ENCODE measurements at regions of chr1 and their contacts with region 1.

Region 1: GRCh38 chr1:112803906-112804762 is 89.0 kb upstream of the PPM1J start:
- DNase-seq: peak in 1 of 2 experiments; percentile 80
- H3K4me3 ChIP-seq: no peak overlapping the region
- H3K27ac ChIP-seq: no peak overlapping the region
- H3K4me1 ChIP-seq: peaks cover 2 to 6% (median 4%) of the 10 kb centered on the region in 4 experiments; a peak in 5 of 7 replicates
- H3K27me3 ChIP-seq: no peaks in the 10 kb centered on the region
- CTCF ChIP-seq: peak; percentile 98 to 99 (median 98)
- EP300 ChIP-seq: no peak
- POLR2A ChIP-seq: no peak
- RAD21 ChIP-seq: peak; percentile 100

Region 2: GRCh38 chr1:112722601-112723510 is 81.3 kb before region 1 on chr1:
- CTCF ChIA-PET with region 1: interaction called, 547 read pairs
- POLR2A ChIA-PET with region 1: interaction called, 20 read pairs
- DNase-seq: peak in 1 of 2 experiments; percentile 68
- H3K4me3 ChIP-seq: peak overlapping the region in 2 of 4 experiments; percentile 18 to 52; a peak in 5 of 8 replicates
- H3K27ac ChIP-seq: no peak overlapping the region
- H3K4me1 ChIP-seq: peaks cover 8 to 21% (median 16%) of the 10 kb centered on the region in 4 experiments
- H3K27me3 ChIP-seq: peaks cover 0 to 26% (median 16%) of the 10 kb centered on the region in 4 experiments; a peak in 5 of 7 replicates
- CTCF ChIP-seq: no peak
- EP300 ChIP-seq: no peak
- POLR2A ChIP-seq: no peak
- RAD21 ChIP-seq: no peak

Region 3: GRCh38 chr1:112744009-112744578 is 60.0 kb before region 1 on chr1:
- CTCF ChIA-PET with region 1: interaction called, 39 read pairs
- POLR2A ChIA-PET with region 1: interaction called, 4 read pairs
- DNase-seq: peak in 1 of 2 experiments; percentile 86
- H3K4me3 ChIP-seq: peak overlapping the region; percentile 39 to 59 (median 50)
- H3K27ac ChIP-seq: no peak overlapping the region
- H3K4me1 ChIP-seq: peaks cover 0 to 7% (median 5%) of the 10 kb centered on the region in 4 experiments; a peak in 4 of 7 replicates
- H3K27me3 ChIP-seq: peaks cover 9 to 34% (median 27%) of the 10 kb centered on the region in 4 experiments
- CTCF ChIP-seq: peak; percentile 47 to 51 (median 51)
- EP300 ChIP-seq: no peak
- POLR2A ChIP-seq: no peak
- RAD21 ChIP-seq: peak; percentile 35 to 52; a peak in 2 of 4 replicates

Region 4: GRCh38 chr1:112855152-112855828 is 51.2 kb after region 1 on chr1:
- CTCF ChIA-PET with region 1: interaction called, 12 read pairs
- POLR2A ChIA-PET with region 1: interaction called, 5 read pairs
- DNase-seq: no peak
- H3K4me3 ChIP-seq: no peak overlapping the region
- H3K27ac ChIP-seq: no peak overlapping the region
- H3K4me1 ChIP-seq: peaks cover 0 to 6% (median 1%) of the 10 kb centered on the region in 4 experiments; a peak in 5 of 7 replicates
- H3K27me3 ChIP-seq: no peaks in the 10 kb centered on the region
- CTCF ChIP-seq: no peak
- EP300 ChIP-seq: no peak
- POLR2A ChIP-seq: no peak
- RAD21 ChIP-seq: no peak

Region 5: GRCh38 chr1:112955781-112956543 is 151.8 kb after region 1 on chr1 and contains the start of gene SLC16A1:
- CTCF ChIA-PET with region 1: interaction called, 13 read pairs
- POLR2A ChIA-PET with region 1: interaction called, 3 read pairs
- DNase-seq: peak; percentile 49 to 89
- H3K4me3 ChIP-seq: peak within 1 kb of the TSS; percentile 81 to 95 (median 90)
- H3K27ac ChIP-seq: peak within 1 kb of the TSS; percentile 79
- H3K4me1 ChIP-seq: peaks cover 4 to 8% (median 5%) of the 10 kb centered on the region in 4 experiments; a peak in 5 of 7 replicates
- H3K27me3 ChIP-seq: no peaks in the 10 kb centered on the region
- CTCF ChIP-seq: peak in 2 of 3 experiments; percentile 21 to 22; a peak in 2 of 4 replicates
- EP300 ChIP-seq: no peak
- POLR2A ChIP-seq: peak; percentile 47 to 67
- RAD21 ChIP-seq: no peak; a peak in 1 of 4 replicates
- total RNA-seq, gene SLC16A1: 435 and 442 TPM in 2 replicates

Region 6: DNA sequence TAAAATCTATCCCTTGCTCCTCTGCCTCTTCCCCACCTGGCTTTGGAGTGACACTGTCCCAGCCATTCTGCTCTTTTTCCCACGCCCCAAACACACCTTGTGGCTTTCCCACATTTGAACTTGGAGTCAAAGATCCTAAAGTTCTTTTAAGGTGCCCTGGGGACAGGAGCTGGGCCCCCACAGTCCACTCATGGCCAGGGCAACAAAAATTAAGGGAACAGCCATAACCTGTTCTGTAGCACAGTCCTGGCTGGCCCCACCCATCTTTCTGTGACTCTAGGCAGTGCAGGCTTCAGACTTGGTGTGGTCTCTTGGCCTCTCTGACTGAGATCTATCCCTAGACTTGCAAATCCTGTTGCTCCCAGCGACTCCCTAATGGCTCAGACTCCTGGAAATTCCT is 443.2 kb after region 1 on chr1:
- CTCF ChIA-PET with region 1: no interaction called
- POLR2A ChIA-PET with region 1: no interaction called
- DNase-seq: no peak
- H3K4me3 ChIP-seq: no peak overlapping the region
- H3K27ac ChIP-seq: no peak overlapping the region
- H3K4me1 ChIP-seq: no peaks in the 10 kb centered on the region
- H3K27me3 ChIP-seq: no peaks in the 10 kb centered on the region
- CTCF ChIP-seq: no peak
- EP300 ChIP-seq: no peak
- POLR2A ChIP-seq: no peak
- RAD21 ChIP-seq: no peak